ENCODE measurements at regions of chr4 and their contacts with region 1.

Region 1: GRCh38 chr4:25448379-25449109 is 71.5 kb downstream of the ANAPC4 start:
- DNase-seq: peak; percentile 93
- H3K4me3 ChIP-seq: no peak overlapping the region
- H3K27me3 ChIP-seq: no peaks in the 10 kb centered on the region; the same call in 1 of the 2 replicates
- CTCF ChIP-seq: no peak

Region 2: DNA sequence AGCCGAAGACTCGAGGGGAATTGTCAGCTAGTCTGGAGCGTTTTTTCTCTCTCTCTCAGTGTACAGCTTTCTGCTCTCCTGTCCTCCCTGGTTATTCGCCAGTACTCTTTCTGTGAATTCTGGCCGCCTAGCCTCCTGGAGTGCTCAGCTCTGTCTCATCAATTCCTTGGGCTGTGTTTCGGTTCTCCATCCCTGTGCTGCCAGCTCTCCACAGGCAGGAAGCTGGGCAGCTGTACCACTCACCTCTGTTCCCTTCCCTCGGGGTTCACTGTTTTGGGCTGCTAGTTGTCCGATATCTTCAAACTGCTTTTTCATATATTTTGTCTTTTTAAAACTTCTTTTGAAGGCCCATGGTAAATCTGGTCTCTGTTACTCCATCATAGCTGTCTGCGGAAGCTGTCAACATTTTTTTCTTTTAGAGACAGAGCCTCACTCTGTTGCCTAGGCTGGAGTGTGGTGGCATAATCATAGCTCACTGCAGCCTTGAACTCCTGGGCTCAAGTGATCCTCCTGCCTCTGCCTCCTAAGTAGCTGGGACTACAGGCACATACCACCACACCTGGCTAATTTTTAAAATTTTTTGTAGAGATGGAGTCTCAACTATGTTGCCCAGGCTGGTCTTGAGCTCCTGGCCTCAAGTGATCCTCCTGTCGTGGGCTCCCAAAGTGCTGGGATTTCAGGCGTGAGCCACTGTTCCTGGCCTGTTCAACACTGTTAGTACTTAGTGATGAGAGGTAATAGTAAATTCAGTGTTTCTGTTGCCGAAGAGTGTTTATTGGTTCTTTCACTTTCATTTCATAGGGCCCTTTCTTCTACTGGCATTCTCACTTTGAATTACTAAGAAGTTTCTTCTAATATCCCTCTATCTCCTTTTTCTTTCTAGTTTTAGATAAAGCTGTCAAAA is 117.4 kb before region 1 on chr4:
- CTCF ChIA-PET with region 1: no interaction called
- POLR2A ChIA-PET with region 1: no interaction called
- DNase-seq: no peak
- H3K4me3 ChIP-seq: no peak overlapping the region
- H3K27me3 ChIP-seq: no peaks in the 10 kb centered on the region
- CTCF ChIP-seq: no peak

Region 3: DNA sequence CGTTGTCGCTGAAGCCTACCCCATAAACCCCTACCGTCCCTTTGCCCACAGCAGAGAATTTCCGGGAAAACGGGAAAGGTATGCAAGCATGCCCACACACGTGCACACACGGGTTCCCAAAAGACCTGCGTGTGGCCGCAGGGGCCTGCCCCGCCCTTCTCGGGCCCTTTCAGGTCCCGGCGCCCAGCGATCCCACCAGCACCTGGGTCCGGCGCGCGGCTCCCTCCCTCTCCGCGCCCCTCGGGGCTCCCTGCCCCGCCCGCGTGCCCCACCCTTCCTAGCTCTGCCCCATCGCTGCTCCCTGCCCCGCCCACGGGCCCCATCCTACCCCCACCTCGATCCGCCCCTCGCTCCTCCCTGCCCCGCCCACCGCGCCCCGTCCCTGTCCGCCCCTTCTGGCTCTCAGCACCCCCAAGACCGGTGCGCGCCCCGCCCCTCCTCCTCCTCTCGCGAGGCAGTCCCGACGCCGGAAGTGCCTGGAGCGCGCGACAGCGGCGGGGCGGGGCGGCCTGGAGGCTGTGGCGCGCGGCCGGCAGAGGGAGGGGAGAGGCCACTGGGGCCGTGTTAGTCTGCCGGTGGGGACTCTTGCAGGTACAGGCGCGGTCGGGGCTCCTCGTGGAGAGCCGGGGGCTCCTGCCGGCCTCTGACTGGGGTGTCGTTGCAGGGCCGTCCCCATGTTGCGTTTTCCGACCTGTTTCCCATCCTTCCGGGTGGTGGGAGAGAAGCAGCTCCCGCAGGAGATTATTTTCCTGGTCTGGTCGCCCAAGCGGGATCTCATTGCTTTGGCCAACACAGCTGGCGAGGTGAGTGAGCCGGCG is 71.6 kb before region 1 on chr4 and contains the start of gene ANAPC4:
- CTCF ChIA-PET with region 1: no interaction called
- POLR2A ChIA-PET with region 1: no interaction called
- DNase-seq: peak; percentile 45
- H3K4me3 ChIP-seq: peak within 1 kb of the TSS; percentile 96
- H3K27me3 ChIP-seq: no peaks in the 10 kb centered on the region
- CTCF ChIP-seq: no peak
- polyA plus RNA-seq, gene ANAPC4: 7.0 and 16.1 TPM in 2 replicates

Region 4: GRCh38 chr4:25563071-25563564 is 114.6 kb after region 1 on chr4:
- CTCF ChIA-PET with region 1: no interaction called
- POLR2A ChIA-PET with region 1: no interaction called
- DNase-seq: no peak
- H3K4me3 ChIP-seq: no peak overlapping the region
- H3K27me3 ChIP-seq: no peaks in the 10 kb centered on the region
- CTCF ChIP-seq: no peak

Region 5: GRCh38 chr4:25608644-25609043 is 160.1 kb after region 1 on chr4:
- CTCF ChIA-PET with region 1: no interaction called
- POLR2A ChIA-PET with region 1: no interaction called
- DNase-seq: no peak
- H3K4me3 ChIP-seq: no peak overlapping the region
- H3K27me3 ChIP-seq: no peaks in the 10 kb centered on the region; the same call in 1 of the 2 replicates
- CTCF ChIP-seq: no peak

Region 6: DNA sequence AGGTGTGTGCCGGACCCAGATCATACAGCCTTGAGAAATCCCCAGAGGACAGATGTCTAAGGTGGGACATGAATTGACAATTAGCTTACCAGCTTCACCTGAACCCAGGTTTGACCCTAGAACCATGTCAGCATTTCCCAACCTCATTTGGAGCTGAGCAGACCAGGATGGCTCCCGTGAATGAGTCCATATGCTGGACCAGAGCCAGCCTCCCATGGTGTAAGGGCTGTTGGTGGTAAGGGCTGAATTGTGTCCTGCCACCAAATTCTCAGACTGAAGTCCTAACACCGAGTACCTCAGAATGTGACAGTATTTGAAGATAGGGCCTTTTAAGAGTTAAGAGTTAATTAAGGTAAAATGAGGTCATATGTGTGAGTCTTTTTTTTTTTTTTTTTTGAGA is 295.4 kb after region 1 on chr4:
- CTCF ChIA-PET with region 1: no interaction called
- POLR2A ChIA-PET with region 1: interaction called, 11 read pairs
- DNase-seq: no peak
- H3K4me3 ChIP-seq: no peak overlapping the region
- H3K27me3 ChIP-seq: no peaks in the 10 kb centered on the region
- CTCF ChIP-seq: no peak

Measured in BJ (cell line).